Activated B cell treated with CpG ODN at 0.5 μM for 24 hours (primary cell): ENCODE measurements at regions of chr9 and their contacts with region 1.

Region 1: DNA sequence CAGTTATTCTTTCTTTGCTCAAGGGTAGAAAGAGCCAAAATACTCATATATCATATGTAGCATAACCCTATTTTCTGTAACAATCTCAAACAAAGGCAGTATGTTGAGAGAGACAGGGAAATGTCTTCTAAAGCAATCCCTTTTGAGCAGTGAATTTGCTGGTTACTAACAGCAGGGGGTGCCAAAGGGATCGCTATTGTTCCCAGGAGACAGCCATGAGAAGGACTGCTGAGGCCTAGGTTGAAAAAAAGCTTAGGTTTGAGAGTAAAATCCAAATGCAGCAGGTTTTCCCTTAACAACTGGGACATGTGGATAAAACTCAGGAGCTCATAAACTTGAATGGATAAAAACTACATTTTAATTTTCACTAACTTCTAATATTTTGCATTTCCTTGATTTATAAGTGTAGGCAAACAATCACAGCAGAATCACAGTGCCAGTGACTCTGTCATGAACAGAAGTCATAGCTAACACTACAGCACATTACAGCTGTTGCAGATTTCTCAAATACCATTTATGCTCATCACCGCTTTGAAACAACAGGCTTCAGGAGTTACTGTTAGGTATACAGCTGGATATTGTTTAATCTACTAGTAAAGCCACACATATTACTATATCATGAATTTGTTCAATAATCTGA is 148.4 kb downstream of the MAPKAP1 start:
- DNase-seq: no peak
- ATAC-seq: peak; percentile 83
- H3K4me3 Mint-ChIP-seq: no peak overlapping the region
- H3K27ac Mint-ChIP-seq: no peak overlapping the region
- H3K4me1 Mint-ChIP-seq: peaks cover 26% of the 10 kb centered on the region
- H3K27me3 Mint-ChIP-seq: no peaks in the 10 kb centered on the region
- CTCF ChIP-seq: no peak

Region 2: DNA sequence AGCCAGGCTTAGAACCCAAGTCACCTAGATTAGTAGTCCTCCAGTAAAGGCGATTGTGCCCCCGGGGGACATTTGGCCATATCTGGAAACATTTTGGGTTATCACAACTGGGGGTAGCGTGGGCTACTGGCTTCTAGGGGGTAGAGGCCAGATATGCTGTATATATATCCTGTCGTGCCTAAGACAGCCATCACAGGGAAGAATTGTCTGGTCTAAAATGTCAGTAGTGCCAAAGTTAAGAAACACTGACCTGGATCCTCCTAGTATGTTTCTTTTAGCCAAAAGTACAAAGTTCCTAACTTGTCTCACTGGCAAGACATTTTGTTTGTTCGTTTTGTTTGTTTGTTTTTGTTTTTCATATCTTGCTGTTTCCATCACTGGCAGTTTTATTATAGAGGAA is 344.4 kb before region 1 on chr9:
- CTCF ChIA-PET with region 1: no interaction called
- POLR2A ChIA-PET with region 1: no interaction called
- intact Hi-C with region 1: no loop called
- DNase-seq: no peak
- ATAC-seq: no peak
- H3K4me3 Mint-ChIP-seq: no peak overlapping the region
- H3K27ac Mint-ChIP-seq: no peak overlapping the region
- H3K4me1 Mint-ChIP-seq: no peaks in the 10 kb centered on the region
- H3K27me3 Mint-ChIP-seq: no peaks in the 10 kb centered on the region
- CTCF ChIP-seq: no peak

Region 3: GRCh38 chr9:125407974-125408900 is 150.3 kb before region 1 on chr9:
- CTCF ChIA-PET with region 1: interaction called, 15 read pairs
- POLR2A ChIA-PET with region 1: no interaction called
- intact Hi-C with region 1: loop called (anchors 5 kb)
- DNase-seq: peak; percentile 79
- ATAC-seq: peak; percentile 86
- H3K4me3 Mint-ChIP-seq: peak overlapping the region; percentile 75
- H3K27ac Mint-ChIP-seq: no peak overlapping the region
- H3K4me1 Mint-ChIP-seq: peaks cover 16% of the 10 kb centered on the region
- H3K27me3 Mint-ChIP-seq: peaks cover 23% of the 10 kb centered on the region
- CTCF ChIP-seq: peak; percentile 68

Region 4: DNA sequence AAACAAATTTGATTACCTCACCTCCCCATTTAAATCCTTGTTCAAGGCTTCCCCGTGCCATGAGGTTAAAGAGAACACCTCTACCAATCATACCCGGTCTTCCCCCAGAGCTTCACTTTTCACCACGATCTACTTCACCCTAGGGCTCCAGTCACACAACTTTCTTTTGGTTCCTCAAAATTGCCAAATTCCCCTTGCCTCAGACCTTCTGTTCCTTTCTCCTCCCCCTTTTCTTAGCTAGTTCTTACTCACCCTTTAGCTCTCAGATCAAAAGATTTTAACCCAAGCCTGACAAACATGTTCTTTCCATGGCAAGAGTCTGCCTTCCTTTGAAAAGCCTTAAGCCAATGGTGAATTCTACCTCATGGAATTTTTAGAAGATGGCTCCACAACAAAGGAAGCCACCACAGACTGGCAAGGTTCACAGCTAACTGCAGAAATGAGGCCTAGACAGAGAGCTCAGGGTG is 91.7 kb after region 1 on chr9:
- CTCF ChIA-PET with region 1: interaction called, 3 read pairs
- POLR2A ChIA-PET with region 1: interaction called, 3 read pairs
- intact Hi-C with region 1: loop called (anchors 5 kb)
- DNase-seq: no peak
- ATAC-seq: peak; percentile 93
- H3K4me3 Mint-ChIP-seq: peak overlapping the region; percentile 59
- H3K27ac Mint-ChIP-seq: peak overlapping the region; percentile 86
- H3K4me1 Mint-ChIP-seq: peaks cover 86% of the 10 kb centered on the region
- H3K27me3 Mint-ChIP-seq: no peaks in the 10 kb centered on the region
- CTCF ChIP-seq: no peak

Region 5: GRCh38 chr9:125829743-125830142 is 271.2 kb after region 1 on chr9:
- CTCF ChIA-PET with region 1: interaction called, 3 read pairs
- POLR2A ChIA-PET with region 1: no interaction called
- intact Hi-C with region 1: loop called (anchors 10 kb)
- DNase-seq: peak; percentile 20
- ATAC-seq: peak; percentile 95
- H3K4me3 Mint-ChIP-seq: peak overlapping the region; percentile 85
- H3K27ac Mint-ChIP-seq: peak overlapping the region; percentile 88
- H3K4me1 Mint-ChIP-seq: peaks cover 30% of the 10 kb centered on the region
- H3K27me3 Mint-ChIP-seq: no peaks in the 10 kb centered on the region
- CTCF ChIP-seq: no peak

Region 6: DNA sequence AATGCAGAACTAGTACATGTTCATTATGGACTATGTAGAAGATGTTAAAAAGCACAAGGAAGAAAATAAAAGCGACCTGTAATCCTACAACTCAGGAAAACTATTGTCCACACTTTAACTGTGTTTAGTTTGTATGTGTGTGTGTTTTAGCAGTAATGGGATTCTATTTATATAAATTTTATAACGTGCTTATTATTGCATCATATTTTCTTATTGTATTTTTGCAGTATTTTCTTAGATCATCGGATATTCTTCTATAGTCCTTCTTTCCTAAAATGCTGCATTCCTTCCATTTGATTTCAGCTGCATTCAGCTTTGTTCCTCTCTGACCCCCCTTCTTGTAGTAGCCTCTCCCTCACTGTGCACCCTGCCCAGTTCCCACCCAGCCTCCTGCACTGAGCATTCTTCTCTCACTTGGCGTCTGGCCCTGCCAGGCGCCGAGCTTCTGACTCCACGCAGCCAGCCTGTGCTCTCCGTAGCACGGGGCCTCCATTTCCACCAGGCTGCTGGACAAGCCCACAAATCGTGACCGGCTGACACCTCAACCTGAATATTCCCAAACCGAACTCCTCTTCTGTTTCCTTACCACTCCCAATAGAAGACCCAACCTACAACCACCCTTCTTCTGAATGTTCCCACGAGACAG is 807.9 kb after region 1 on chr9:
- CTCF ChIA-PET with region 1: no interaction called
- POLR2A ChIA-PET with region 1: interaction called, 13 read pairs
- intact Hi-C with region 1: no loop called
- DNase-seq: no peak
- ATAC-seq: no peak
- H3K4me3 Mint-ChIP-seq: no peak overlapping the region
- H3K27ac Mint-ChIP-seq: no peak overlapping the region
- H3K4me1 Mint-ChIP-seq: no peaks in the 10 kb centered on the region
- H3K27me3 Mint-ChIP-seq: peaks cover 2% of the 10 kb centered on the region
- CTCF ChIP-seq: no peak